ENCODE measurements at regions of chr14 and their contacts with region 1.

Region 1: DNA sequence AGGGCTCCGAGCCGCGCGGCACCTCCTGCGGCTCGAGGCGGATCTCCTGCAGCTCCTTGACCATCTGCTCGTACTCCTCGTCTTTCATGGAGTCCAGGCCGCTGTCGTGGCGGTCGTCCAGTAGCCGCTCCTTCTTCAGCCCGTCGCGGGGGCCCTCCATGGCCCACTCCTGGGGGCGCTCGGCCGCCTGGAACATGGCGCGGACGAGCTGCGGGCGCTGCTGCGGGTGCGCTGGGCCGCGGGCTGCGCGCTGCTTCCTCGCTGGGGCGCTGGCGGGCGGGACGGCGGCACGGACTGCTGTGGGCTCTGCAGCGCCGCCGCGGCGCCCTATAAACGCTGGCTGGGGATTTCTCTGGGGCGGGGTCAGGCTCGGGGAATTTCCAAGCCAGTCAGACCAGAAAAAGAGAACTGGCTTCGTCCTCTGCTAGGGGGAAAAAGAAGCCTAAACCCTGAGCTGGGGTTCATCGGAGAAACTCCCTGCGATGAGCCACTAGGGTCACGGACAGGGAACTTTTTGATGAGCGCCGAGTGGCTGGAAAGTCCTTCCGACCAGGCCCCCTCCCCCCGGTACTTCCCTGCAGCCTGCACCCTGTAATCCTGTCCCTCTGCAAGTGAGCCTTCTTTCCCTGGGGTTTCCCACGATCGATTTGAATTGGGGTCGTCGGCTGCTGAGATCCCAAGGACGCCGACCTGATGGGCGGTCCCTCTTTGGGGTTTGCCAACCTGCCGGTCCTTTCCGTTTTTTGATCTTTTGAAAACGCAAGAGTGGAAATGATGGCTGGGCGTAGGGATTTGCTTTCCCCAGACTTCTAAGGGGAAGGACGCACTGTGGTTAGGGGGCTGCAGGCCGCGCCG is at the start of gene NFKBIA:
- DNase-seq: peak; percentile 96
- H3K4me3 Mint-ChIP-seq: peak within 1 kb of the TSS; percentile 98
- H3K27ac Mint-ChIP-seq: peak within 1 kb of the TSS; percentile 99
- H3K4me1 Mint-ChIP-seq: peaks cover 42% of the 10 kb centered on the region
- H3K27me3 Mint-ChIP-seq: no peaks in the 10 kb centered on the region
- total RNA-seq, gene NFKBIA: 390 to 393 TPM

Region 2: GRCh38 chr14:34875031-34875922 is 529.4 kb before region 1 on chr14 and contains the start of gene BAZ1A:
- CTCF ChIA-PET with region 1: no interaction called
- POLR2A ChIA-PET with region 1: interaction called, 7 read pairs
- intact Hi-C with region 1: loop called (anchors 2 kb)
- DNase-seq: peak; percentile 52
- H3K4me3 Mint-ChIP-seq: peak within 1 kb of the TSS; percentile 100
- H3K27ac Mint-ChIP-seq: peak within 1 kb of the TSS; percentile 98
- H3K4me1 Mint-ChIP-seq: peaks cover 33% of the 10 kb centered on the region
- H3K27me3 Mint-ChIP-seq: no peaks in the 10 kb centered on the region
- total RNA-seq, gene BAZ1A: 67.8 to 68.0 TPM

Region 3: GRCh38 chr14:35140718-35141581 is 263.7 kb before region 1 on chr14:
- CTCF ChIA-PET with region 1: interaction called, 12 read pairs
- POLR2A ChIA-PET with region 1: interaction called, 6 read pairs
- intact Hi-C with region 1: loop called (anchors 1 kb)
- DNase-seq: no peak
- H3K4me3 Mint-ChIP-seq: no peak overlapping the region
- H3K27ac Mint-ChIP-seq: no peak overlapping the region
- H3K4me1 Mint-ChIP-seq: peaks cover 17% of the 10 kb centered on the region
- H3K27me3 Mint-ChIP-seq: no peaks in the 10 kb centered on the region

Region 4: GRCh38 chr14:35229495-35230089 is 175.1 kb before region 1 on chr14:
- CTCF ChIA-PET with region 1: interaction called, 28 read pairs
- POLR2A ChIA-PET with region 1: interaction called, 6 read pairs
- intact Hi-C with region 1: loop called (anchors 1 kb)
- DNase-seq: no peak
- H3K4me3 Mint-ChIP-seq: no peak overlapping the region
- H3K27ac Mint-ChIP-seq: peak overlapping the region; percentile 26
- H3K4me1 Mint-ChIP-seq: peaks cover 23% of the 10 kb centered on the region
- H3K27me3 Mint-ChIP-seq: no peaks in the 10 kb centered on the region

Region 5: DNA sequence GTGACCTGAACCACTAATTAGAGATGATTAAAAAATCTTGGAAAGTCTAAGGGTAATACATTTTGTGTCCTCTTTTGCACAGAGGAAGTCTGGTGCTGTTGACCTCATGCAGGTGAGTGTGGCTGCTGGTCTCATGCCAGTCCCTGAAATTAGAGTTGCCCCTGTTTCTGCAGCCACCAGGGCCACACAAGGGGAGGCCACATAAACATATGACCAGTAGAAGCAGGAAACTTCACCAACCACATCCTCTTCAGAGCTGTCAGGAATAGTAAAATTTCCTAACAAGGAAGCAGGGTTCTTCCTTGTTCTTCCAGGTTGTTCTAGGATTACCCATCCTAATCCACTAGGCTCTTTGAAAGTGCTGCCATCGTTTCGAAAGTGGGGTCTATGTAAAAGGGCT is 84.2 kb before region 1 on chr14:
- CTCF ChIA-PET with region 1: interaction called, 23 read pairs
- POLR2A ChIA-PET with region 1: interaction called, 82 read pairs
- intact Hi-C with region 1: no loop called
- DNase-seq: no peak
- H3K4me3 Mint-ChIP-seq: no peak overlapping the region
- H3K27ac Mint-ChIP-seq: no peak overlapping the region
- H3K4me1 Mint-ChIP-seq: no peaks in the 10 kb centered on the region
- H3K27me3 Mint-ChIP-seq: no peaks in the 10 kb centered on the region

Region 6: GRCh38 chr14:35416108-35416750 is 11.6 kb after region 1 on chr14:
- CTCF ChIA-PET with region 1: interaction called, 41 read pairs
- POLR2A ChIA-PET with region 1: interaction called, 181 read pairs
- intact Hi-C with region 1: loop called (anchors 1 kb)
- DNase-seq: peak; percentile 89
- H3K4me3 Mint-ChIP-seq: peak overlapping the region; percentile 70
- H3K27ac Mint-ChIP-seq: peak overlapping the region; percentile 92
- H3K4me1 Mint-ChIP-seq: peaks cover 41% of the 10 kb centered on the region
- H3K27me3 Mint-ChIP-seq: no peaks in the 10 kb centered on the region

Region 7: GRCh38 chr14:35480128-35480769 is 75.6 kb after region 1 on chr14:
- CTCF ChIA-PET with region 1: no interaction called
- POLR2A ChIA-PET with region 1: no interaction called
- intact Hi-C with region 1: no loop called
- DNase-seq: no peak
- H3K4me3 Mint-ChIP-seq: no peak overlapping the region
- H3K27ac Mint-ChIP-seq: no peak overlapping the region
- H3K4me1 Mint-ChIP-seq: peaks cover 7% of the 10 kb centered on the region
- H3K27me3 Mint-ChIP-seq: peaks cover 13% of the 10 kb centered on the region

Region 8: GRCh38 chr14:35539969-35540368 is 135.3 kb after region 1 on chr14:
- CTCF ChIA-PET with region 1: no interaction called
- POLR2A ChIA-PET with region 1: no interaction called
- intact Hi-C with region 1: no loop called
- DNase-seq: no peak
- H3K4me3 Mint-ChIP-seq: no peak overlapping the region
- H3K27ac Mint-ChIP-seq: no peak overlapping the region
- H3K4me1 Mint-ChIP-seq: peaks cover 5% of the 10 kb centered on the region
- H3K27me3 Mint-ChIP-seq: peaks cover 12% of the 10 kb centered on the region